Right ventricle myocardium superior (tissue), 1 donor: ENCODE measurements at regions of chr15 and their contacts with region 1.

Region 1: DNA sequence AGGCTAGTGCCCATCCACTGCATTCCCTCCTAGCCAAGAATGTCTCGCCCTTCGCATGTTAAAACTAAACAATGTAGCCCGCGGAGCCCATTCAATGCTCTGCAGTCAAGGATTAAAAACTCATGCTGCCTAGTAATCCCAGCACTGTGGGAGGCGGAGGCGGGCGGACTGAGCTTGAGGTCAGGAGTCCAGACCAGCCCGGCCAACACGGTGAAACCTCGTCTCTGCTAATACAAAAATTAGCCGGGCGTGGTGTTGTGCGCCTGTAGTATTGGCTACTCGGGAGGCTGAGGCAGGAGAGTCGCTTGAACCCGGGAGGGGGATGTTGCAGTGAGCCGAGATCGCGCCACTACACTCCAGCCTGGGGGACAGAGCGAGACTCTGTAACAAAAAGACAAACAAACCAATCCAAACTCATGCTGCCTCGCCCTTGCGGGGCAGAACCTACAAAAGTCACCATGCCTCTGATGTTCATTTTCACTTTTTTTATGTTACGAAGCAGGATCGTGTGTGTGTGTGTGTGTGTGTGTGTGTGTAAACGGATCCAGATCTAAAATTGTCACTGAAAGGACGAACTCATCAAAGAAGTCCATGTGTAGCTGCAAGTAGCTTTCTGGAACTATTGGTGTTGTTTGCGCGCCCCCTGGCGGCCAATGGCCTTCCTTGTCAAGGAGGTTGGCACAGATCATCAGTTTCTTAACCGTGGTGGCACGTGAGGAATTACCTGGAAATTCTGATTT is 54.8 kb upstream of the SPESP1 start:
- DNase-seq: peak; percentile 96
- ATAC-seq: peak; percentile 98

Region 2: GRCh38 chr15:68252925-68253534 is 622.5 kb before region 1 on chr15:
- intact Hi-C with region 1: loop called (anchors 5 kb)
- DNase-seq: no peak
- ATAC-seq: peak; percentile 30

Region 3: GRCh38 chr15:68559345-68560310 is 315.9 kb before region 1 on chr15:
- intact Hi-C with region 1: loop called (anchors 2 kb)
- DNase-seq: peak; percentile 91
- ATAC-seq: peak; percentile 99

Region 4: GRCh38 chr15:68672781-68673205 is 202.8 kb before region 1 on chr15:
- intact Hi-C with region 1: loop called (anchors 5 kb)
- DNase-seq: no peak
- ATAC-seq: no peak

Region 5: GRCh38 chr15:68730471-68730919 is 145.1 kb before region 1 on chr15:
- intact Hi-C with region 1: loop called (anchors 5 kb)
- DNase-seq: no peak
- ATAC-seq: peak; percentile 50

Region 6: GRCh38 chr15:68783226-68784058 is 92.1 kb before region 1 on chr15:
- intact Hi-C with region 1: loop called (anchors 10 kb)
- DNase-seq: peak; percentile 70
- ATAC-seq: peak; percentile 41